ENCODE measurements at regions of chr3 and their contacts with region 1.

Region 1: GRCh38 chr3:14144423-14145075 is 19.7 kb downstream of the TMEM43 start:
- DNase-seq: peak; percentile 70
- H3K4me3 Mint-ChIP-seq: peak overlapping the region; percentile 19
- H3K27ac Mint-ChIP-seq: peak overlapping the region; percentile 81
- H3K4me1 Mint-ChIP-seq: peaks cover 48% of the 10 kb centered on the region
- H3K27me3 Mint-ChIP-seq: no peaks in the 10 kb centered on the region

Region 2: GRCh38 chr3:14082108-14082657 is 62.4 kb before region 1 on chr3:
- CTCF ChIA-PET with region 1: no interaction called
- intact Hi-C with region 1: loop called (anchors 1 kb)
- DNase-seq: peak; percentile 45
- H3K4me3 Mint-ChIP-seq: no peak overlapping the region
- H3K27ac Mint-ChIP-seq: no peak overlapping the region
- H3K4me1 Mint-ChIP-seq: peaks cover 12% of the 10 kb centered on the region
- H3K27me3 Mint-ChIP-seq: peaks cover 2% of the 10 kb centered on the region

Region 3: GRCh38 chr3:14166877-14167603 is 22.5 kb after region 1 on chr3:
- CTCF ChIA-PET with region 1: no interaction called
- intact Hi-C with region 1: no loop called
- DNase-seq: no peak
- H3K4me3 Mint-ChIP-seq: no peak overlapping the region
- H3K27ac Mint-ChIP-seq: no peak overlapping the region
- H3K4me1 Mint-ChIP-seq: peaks cover 13% of the 10 kb centered on the region
- H3K27me3 Mint-ChIP-seq: no peaks in the 10 kb centered on the region

Measured in activated naive CD4-positive, alpha-beta T cell treated with anti-CD3 and anti-CD28 coated beads for 36 hours (primary cell).